Activated naive CD4-positive, alpha-beta T cell treated with anti-CD3 and anti-CD28 coated beads for 36 hours (primary cell): ENCODE measurements at regions of chr17 and their contacts with region 1.

Region 1: DNA sequence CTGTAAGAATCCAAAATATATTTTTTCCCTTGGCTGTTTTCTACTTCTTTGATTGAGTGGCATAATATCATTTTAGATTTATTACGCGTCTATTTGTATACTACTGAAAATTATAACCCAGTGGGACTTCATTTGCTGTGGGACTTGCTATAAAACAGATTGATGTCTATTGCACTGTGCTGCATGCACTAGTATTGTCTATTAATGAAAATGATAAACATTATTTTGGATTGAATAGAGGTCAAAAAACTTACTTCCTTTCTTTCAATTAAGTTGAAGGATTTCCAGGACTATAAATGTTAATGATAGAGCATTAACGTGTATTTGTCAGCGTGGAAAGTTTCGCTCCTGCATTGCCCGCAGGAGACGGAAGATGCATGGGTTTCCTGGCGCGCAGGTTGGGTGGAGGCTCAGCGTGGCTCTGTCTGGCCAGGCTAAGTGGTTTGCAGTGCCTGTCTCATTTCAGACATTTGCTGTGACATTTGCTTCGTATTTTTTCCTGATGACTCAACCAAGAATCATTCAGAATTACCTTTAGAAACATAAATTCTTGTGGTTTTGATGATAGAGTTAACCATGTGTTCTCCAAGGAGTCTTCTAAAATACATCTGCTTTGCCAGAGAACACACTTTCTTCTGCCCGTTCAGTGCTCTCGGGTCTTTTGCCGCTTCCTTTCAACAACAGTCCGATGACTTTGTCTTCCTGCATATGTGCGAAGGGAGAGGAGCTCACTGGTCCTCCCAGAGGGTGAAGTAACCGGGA is 216.7 kb downstream of the RPTOR start:
- DNase-seq: peak; percentile 84
- H3K4me3 Mint-ChIP-seq: peak overlapping the region; percentile 56
- H3K27ac Mint-ChIP-seq: peak overlapping the region; percentile 97
- H3K4me1 Mint-ChIP-seq: peaks cover 73% of the 10 kb centered on the region
- H3K27me3 Mint-ChIP-seq: no peaks in the 10 kb centered on the region

Region 2: DNA sequence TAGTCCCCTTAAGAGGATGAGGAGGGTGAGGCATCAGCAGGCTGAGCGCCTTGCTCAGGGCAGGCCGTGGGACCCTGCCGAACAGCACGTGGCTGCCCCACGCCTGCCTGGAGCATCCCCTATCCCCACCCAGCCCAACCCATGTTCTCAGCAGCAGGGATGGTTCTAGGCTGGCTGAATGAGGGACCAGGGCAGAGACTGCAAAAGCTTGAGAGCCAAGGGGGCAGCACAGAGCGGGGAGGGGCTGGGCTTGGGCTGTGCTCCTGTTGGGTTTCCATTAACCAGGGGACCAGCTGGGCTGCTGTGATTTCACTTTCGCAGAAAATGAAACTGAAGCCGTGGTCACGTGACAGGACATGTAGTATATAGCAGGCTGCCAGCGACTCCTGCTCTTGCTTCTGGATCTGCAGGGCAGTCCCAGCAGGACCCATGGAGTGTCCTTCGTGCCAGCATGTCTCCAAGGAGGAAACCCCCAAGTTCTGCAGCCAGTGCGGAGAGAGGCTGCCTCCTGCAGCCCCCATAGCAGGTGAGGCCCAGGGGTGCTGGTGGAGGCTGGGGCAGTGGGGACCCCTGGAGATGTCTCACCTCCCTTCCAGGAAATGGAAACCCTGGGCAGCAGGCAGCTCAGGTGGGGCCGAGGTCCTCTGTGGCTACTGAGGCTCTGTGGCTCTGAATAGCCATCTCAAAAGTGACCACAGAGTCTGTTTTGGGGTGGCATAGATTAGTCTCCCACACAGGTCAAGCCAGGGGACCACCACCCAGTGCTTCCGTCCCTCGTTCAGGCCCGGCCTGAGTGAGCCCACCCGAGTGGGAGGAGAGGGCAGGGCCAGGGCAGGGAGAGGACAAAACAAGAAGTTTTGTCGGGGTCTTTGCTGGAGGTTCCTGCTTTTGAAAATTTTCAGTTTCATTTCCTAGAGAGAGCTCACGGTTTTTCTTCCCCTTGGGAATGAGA is 497.8 kb before region 1 on chr17:
- CTCF ChIA-PET with region 1: no interaction called
- intact Hi-C with region 1: loop called (anchors 10 kb)
- DNase-seq: peak; percentile 95
- H3K4me3 Mint-ChIP-seq: peak overlapping the region; percentile 96
- H3K27ac Mint-ChIP-seq: peak overlapping the region; percentile 92
- H3K4me1 Mint-ChIP-seq: peaks cover 60% of the 10 kb centered on the region
- H3K27me3 Mint-ChIP-seq: no peaks in the 10 kb centered on the region

Region 3: GRCh38 chr17:80675438-80676095 is 85.7 kb before region 1 on chr17:
- CTCF ChIA-PET with region 1: no interaction called
- intact Hi-C with region 1: loop called (anchors 5 kb)
- DNase-seq: no peak
- H3K4me3 Mint-ChIP-seq: no peak overlapping the region
- H3K27ac Mint-ChIP-seq: no peak overlapping the region
- H3K4me1 Mint-ChIP-seq: peaks cover 70% of the 10 kb centered on the region
- H3K27me3 Mint-ChIP-seq: no peaks in the 10 kb centered on the region

Region 4: GRCh38 chr17:80774643-80775281 is 13.5 kb after region 1 on chr17:
- CTCF ChIA-PET with region 1: interaction called, 6 read pairs
- intact Hi-C with region 1: loop called (anchors 1 kb)
- DNase-seq: peak; percentile 80
- H3K4me3 Mint-ChIP-seq: peak overlapping the region; percentile 66
- H3K27ac Mint-ChIP-seq: peak overlapping the region; percentile 89
- H3K4me1 Mint-ChIP-seq: peaks cover 73% of the 10 kb centered on the region
- H3K27me3 Mint-ChIP-seq: no peaks in the 10 kb centered on the region

Region 5: GRCh38 chr17:80791758-80792284 is 30.5 kb after region 1 on chr17:
- CTCF ChIA-PET with region 1: interaction called, 4 read pairs
- intact Hi-C with region 1: loop called (anchors 1 kb)
- DNase-seq: peak; percentile 77
- H3K4me3 Mint-ChIP-seq: peak overlapping the region; percentile 58
- H3K27ac Mint-ChIP-seq: peak overlapping the region; percentile 94
- H3K4me1 Mint-ChIP-seq: peaks cover 87% of the 10 kb centered on the region
- H3K27me3 Mint-ChIP-seq: no peaks in the 10 kb centered on the region

Region 6: DNA sequence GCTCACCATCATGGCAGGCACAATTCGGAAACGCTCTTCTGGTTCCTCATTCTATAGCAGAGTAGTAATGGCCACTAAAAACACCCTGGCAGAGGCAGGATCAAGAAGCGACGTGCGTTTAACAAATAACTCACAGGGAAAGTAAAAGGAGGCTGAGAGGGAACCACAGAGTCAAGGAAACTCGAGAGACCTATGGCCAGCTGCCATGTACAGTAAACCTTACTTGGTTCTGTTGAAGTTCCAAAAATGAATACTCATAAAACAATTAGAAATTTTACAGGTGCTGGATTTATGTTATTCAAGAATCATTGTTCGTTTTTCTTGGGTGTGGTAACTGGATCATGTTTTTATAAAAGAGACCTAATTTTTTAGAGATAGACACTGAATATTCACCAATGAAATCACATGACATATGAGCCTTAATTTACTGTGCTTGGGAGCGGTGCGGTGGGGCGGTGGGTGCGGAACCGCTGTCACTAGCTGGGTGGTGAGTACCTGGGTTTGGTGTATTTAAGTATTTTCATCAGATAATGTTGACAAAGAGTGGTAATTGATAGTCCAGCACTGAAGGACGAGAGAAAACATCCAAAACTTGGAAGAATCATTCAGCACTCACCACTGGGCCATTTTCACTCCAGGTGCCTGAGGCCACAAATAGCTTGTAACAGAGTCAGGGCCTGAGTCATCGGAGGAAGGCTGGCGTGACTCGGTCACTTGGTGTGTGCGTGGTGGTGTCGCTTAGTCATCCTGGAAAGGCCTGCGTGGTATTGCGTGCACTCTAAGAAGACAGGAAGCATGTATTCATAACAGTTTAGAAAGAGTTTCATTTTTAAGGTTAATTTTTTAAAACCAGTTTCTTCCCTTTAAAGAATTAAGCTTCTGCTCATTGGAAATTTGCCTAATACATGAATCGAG is 94.9 kb after region 1 on chr17:
- CTCF ChIA-PET with region 1: no interaction called
- intact Hi-C with region 1: loop called (anchors 1 kb)
- DNase-seq: peak; percentile 96
- H3K4me3 Mint-ChIP-seq: peak overlapping the region; percentile 9
- H3K27ac Mint-ChIP-seq: peak overlapping the region; percentile 94
- H3K4me1 Mint-ChIP-seq: peaks cover 75% of the 10 kb centered on the region
- H3K27me3 Mint-ChIP-seq: no peaks in the 10 kb centered on the region